ENCODE measurements at regions of chr16 and their contacts with region 1.

Region 1: GRCh38 chr16:15672514-15673167 is 22.6 kb downstream of the NDE1 start:
- DNase-seq: peak; percentile 96 to 99 (median 99)
- H3K4me3 ChIP-seq: peak overlapping the region in 4 of 7 experiments; percentile 16 to 57 (median 44)
- H3K27ac ChIP-seq: peak overlapping the region; percentile 98 to 99
- H3K4me1 ChIP-seq: peaks cover 5 to 50% (median 33%) of the 10 kb centered on the region in 4 experiments
- H3K27me3 ChIP-seq: no peaks in the 10 kb centered on the region

Region 2: GRCh38 chr16:15643048-15643945 is 29.3 kb before region 1 on chr16 and contains the start of gene MARF1:
- CTCF ChIA-PET with region 1: interaction called, 16 read pairs
- POLR2A ChIA-PET with region 1: interaction called, 5 read pairs
- DNase-seq: peak; percentile 95 to 98 (median 98)
- H3K4me3 ChIP-seq: peak within 1 kb of the TSS; percentile 58 to 98 (median 90)
- H3K27ac ChIP-seq: peak within 1 kb of the TSS; percentile 99 to 100
- H3K4me1 ChIP-seq: peaks cover 23 to 37% (median 28%) of the 10 kb centered on the region in 4 experiments
- H3K27me3 ChIP-seq: no peaks in the 10 kb centered on the region

Region 3: GRCh38 chr16:15660203-15660601 is 12.4 kb before region 1 on chr16:
- CTCF ChIA-PET with region 1: interaction called, 15 read pairs
- POLR2A ChIA-PET with region 1: interaction called, 4 read pairs
- DNase-seq: no peak
- H3K4me3 ChIP-seq: no peak overlapping the region
- H3K27ac ChIP-seq: peak overlapping the region in 1 of 2 experiments; percentile 64
- H3K4me1 ChIP-seq: peaks cover 2 to 4% (median 3%) of the 10 kb centered on the region in 4 experiments
- H3K27me3 ChIP-seq: no peaks in the 10 kb centered on the region

Region 4: DNA sequence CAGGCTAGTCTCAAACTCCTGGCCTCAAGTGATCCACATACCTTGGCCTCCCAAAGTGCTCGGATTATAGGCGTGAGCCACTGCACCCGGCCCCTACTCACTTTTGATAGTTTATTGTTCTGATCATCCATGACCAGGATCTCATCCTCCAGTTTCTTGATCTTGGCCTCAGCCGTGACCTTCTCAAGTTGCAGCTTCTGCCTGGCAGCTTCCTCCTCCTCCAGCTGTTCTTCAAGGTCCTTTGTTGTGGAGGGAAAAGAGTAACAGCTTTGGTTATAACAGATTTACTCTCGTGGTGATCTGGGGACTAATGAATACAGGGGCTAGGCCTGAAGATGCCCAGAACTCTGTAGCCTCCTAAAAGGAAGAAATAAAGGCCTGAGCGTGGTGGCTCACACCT is 67.3 kb after region 1 on chr16:
- CTCF ChIA-PET with region 1: no interaction called
- POLR2A ChIA-PET with region 1: no interaction called
- DNase-seq: no peak
- H3K4me3 ChIP-seq: no peak overlapping the region
- H3K27ac ChIP-seq: no peak overlapping the region
- H3K4me1 ChIP-seq: peaks cover 0 to 4% (median 2%) of the 10 kb centered on the region in 4 experiments
- H3K27me3 ChIP-seq: no peaks in the 10 kb centered on the region